Common myeloid progenitor, CD34-positive (primary cell): ENCODE measurements at regions of chr1 and their contacts with region 1.

Region 1: DNA sequence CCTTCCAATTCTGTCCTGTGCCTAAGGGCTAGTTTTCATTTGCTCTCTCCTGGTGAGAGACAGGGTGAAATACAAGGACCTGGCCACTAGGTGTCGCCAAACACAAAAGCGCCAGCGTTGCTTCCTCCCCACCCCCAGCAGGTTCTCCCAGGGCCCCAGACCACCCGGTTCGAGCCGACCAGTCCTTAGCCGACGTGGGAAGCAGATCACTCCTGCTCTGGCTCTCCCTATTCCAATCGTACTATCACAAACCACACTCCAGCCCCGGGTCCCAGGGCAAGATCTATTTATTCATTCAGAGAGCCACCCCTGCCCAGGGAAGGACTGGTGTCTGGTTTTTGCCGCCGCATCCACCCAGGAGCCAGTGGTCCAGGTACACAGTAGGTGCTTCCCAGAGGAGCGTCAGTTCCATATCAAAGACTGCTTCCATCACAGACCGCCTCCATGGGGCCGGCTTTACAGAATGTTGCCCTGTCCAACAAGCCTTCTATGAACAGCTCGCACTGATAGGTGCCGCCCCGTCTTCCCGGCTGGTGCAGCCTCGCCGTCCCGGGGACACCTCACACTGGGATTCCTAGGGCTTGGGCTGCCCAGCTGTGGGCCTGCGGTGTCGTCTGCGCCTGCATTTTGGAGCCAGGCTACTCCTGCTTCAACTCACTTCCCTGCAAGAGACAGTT is 35.0 kb downstream of the CTNNBIP1 start:
- DNase-seq: peak; percentile 78 to 85 (median 78)
- H3K4me3 ChIP-seq: peak overlapping the region in 2 of 7 experiments; percentile 2 to 50
- H3K27ac ChIP-seq: no peak overlapping the region
- H3K4me1 ChIP-seq: peaks cover 0 to 13% (median 6%) of the 10 kb centered on the region in 4 experiments
- H3K27me3 ChIP-seq: no peaks in the 10 kb centered on the region

Region 2: GRCh38 chr1:9842781-9843577 is 32.1 kb before region 1 on chr1:
- CTCF ChIA-PET with region 1: no interaction called
- POLR2A ChIA-PET with region 1: no interaction called
- DNase-seq: no peak
- H3K4me3 ChIP-seq: no peak overlapping the region
- H3K27ac ChIP-seq: no peak overlapping the region
- H3K4me1 ChIP-seq: peaks cover under 1 to 20% (median 9%) of the 10 kb centered on the region in 4 experiments
- H3K27me3 ChIP-seq: no peaks in the 10 kb centered on the region

Region 3: DNA sequence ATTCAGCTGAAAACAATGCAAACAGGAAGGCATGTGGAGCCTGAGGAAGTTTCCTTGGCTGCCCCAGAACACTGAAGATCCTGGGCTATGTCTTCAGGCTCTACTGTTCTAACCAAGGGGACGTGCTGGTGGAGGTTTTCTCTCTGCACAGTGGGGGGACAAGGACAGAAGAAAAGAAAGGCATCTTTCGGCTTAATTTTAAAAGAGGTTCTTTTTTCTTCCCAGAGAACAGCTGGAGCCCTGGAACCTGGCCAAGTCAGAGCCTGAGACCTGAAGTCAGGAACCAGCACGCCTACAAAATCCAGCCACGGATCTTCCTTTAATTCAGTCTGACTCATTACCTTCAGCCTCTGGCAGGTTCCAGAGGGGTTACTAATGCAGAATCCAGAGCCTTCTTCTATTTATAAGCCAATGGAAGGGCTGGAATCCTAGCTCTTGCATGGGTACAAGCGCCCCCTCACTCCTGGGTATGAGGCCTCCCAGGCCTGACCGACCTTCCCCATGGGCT is 15.2 kb after region 1 on chr1:
- CTCF ChIA-PET with region 1: interaction called, 34 read pairs
- POLR2A ChIA-PET with region 1: interaction called, 5 read pairs
- DNase-seq: peak in 2 of 3 donors; percentile 50 to 58
- H3K4me3 ChIP-seq: peak overlapping the region in 1 of 7 experiments; percentile 28
- H3K27ac ChIP-seq: peak overlapping the region in 1 of 2 experiments; percentile 50
- H3K4me1 ChIP-seq: peaks cover 18 to 60% (median 58%) of the 10 kb centered on the region in 4 experiments
- H3K27me3 ChIP-seq: no peaks in the 10 kb centered on the region

Region 4: GRCh38 chr1:9910425-9911178 is 35.5 kb after region 1 on chr1:
- CTCF ChIA-PET with region 1: interaction called, 129 read pairs
- POLR2A ChIA-PET with region 1: interaction called, 4 read pairs
- DNase-seq: peak; percentile 99
- H3K4me3 ChIP-seq: peak overlapping the region; percentile 71 to 96 (median 85)
- H3K27ac ChIP-seq: peak overlapping the region; percentile 69 to 86
- H3K4me1 ChIP-seq: peaks cover 2 to 42% (median 14%) of the 10 kb centered on the region in 4 experiments
- H3K27me3 ChIP-seq: no peaks in the 10 kb centered on the region

Region 5: DNA sequence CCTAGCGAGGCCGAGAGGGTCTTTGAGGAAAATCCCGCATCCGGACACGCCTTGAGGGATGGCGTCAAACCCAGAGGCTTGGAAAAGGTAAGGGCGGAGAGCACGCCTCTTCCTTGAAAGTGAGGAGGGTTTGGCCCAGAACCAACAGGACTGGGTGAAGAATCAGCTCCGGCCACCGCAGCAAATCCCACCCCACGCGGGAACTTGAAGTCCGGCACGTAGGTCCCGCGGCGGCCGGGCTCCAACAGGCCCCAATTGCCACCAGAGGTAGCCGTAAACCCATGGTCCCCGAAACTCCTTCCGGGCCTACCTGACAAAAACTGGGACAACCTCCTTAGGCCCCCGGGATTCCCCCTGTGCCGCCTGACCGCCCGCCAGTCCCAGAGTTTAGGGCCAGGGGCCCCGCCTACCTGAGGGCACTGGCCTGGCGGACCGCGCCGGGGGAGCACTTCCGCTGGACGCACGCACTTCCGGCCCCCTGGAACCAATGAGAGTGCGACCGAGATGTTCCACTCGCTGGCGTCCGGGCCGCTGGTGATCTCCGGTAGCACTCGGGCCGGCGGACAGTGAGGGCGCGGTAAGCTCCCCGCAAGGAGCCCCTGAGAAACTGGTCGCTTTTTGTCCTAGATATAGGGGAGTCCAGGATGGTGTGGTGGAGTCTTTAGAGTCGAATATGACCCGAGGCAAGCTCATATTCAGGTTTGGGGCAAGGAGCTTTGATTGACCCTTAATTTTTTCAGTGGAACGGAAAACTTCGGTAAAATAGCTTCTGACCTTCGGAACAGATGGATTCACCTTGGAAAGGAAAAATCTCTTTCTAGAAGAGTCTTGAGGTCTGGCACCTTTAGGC is 68.1 kb after region 1 on chr1 and contains the starts of genes LZIC and NMNAT1:
- CTCF ChIA-PET with region 1: interaction called, 45 read pairs
- POLR2A ChIA-PET with region 1: no interaction called
- DNase-seq: peak; percentile 91 to 93 (median 93)
- H3K4me3 ChIP-seq: peak within 1 kb of the TSS; percentile 80 to 98 (median 92)
- H3K27ac ChIP-seq: peak within 1 kb of the TSS; percentile 89 to 96
- H3K4me1 ChIP-seq: peaks cover 0 to 21% (median 7%) of the 10 kb centered on the region in 4 experiments
- H3K27me3 ChIP-seq: no peaks in the 10 kb centered on the region